Posterior cingulate gyrus (tissue), 11 donors: ENCODE measurements at regions of chr14 and their contacts with region 1.

Region 1: GRCh38 chr14:58199726-58200479 is at the start of gene ACTR10:
- DNase-seq: peak; percentile 69 to 96 (median 78)

Region 2: DNA sequence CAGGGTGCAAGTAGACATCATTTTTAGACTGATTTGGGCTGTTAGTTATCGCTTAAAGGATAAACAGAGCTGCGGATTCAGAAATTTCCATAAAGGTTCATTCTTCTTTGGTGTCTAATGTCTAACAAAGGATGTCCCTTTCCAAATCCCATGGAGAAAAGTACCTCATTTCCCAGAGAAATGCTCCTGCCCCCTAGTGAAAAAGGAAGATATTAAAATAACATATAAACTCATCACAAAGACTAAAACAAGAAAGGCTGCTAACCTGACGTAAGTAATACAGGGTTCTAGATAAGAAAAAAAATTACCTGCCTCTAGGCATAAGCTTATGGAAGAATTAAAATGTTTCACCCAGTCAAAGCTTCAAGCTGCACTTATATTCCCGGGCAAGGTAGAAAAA is 70.7 kb before region 1 on chr14:
- intact Hi-C with region 1: no loop called
- DNase-seq: no peak

Region 3: DNA sequence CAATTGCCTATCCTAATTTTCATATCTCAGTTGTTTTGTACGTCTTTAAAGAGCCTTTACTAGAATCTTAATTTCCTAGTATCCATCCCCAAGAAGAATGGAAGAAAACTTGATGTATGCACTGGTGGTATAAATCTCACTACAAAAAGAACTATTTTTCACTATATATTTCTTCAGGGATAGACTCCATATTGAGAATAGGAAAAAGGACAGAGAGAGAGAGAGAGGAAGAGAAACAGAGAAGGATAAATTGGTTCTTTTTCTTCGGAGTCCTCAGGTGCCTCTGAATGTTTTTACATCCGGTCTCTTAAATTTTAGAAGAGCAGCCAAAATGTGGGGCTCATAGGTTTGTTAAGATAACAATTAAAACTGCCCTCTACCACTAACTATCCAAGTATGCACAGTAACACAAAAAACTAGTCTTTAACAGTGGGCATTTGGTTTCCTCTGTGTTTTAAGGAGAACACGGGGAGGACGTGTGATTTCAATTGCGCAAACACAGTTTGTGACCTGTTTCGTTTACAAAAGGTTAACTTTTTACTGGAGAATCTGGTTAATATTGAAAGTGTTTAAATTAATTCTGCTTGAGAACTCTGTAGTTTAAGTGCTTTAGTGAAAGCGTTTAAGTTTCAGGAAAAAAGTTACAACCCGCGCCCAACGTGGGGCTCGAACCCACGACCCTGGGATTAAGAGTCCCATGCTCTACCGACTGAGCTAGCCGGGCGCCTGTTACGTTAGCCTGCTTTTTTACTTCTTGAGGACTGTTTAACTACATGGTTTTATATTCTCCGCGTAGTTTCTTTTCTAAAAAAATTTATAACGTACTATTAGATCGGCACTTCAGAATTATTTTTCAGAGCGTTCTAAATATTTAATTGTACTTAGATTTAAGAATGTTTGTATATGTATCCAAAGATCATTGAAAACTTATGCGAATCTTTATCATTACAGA is 39.6 kb after region 1 on chr14:
- intact Hi-C with region 1: loop called (anchors 5 kb)
- DNase-seq: peak; percentile 56 to 94 (median 68)